Activated T-helper 1 cell treated with anti-CD3 and anti-CD28 coated beads, Interleukin-12 subunit alpha, Interleukin-12 subunit beta, Interleukin-2, Interleukin-4 antibody, amounts not matched to agents 30 ng/mL and 10 ng/mL and 1 ng/mL, durations not matched to agents 14 hours and 24 hours and 36 hours (primary cell): ENCODE measurements at regions of chr10 and their contacts with region 1.

Region 1: GRCh38 chr10:103800789-103801540 is 54.4 kb downstream of the SH3PXD2A start:
- DNase-seq: peak; percentile 64
- H3K4me3 Mint-ChIP-seq: peak overlapping the region; percentile 65
- H3K27ac Mint-ChIP-seq: peak overlapping the region; percentile 80
- H3K4me1 Mint-ChIP-seq: peaks cover 31% of the 10 kb centered on the region
- H3K27me3 Mint-ChIP-seq: peaks cover 3% of the 10 kb centered on the region

Region 2: DNA sequence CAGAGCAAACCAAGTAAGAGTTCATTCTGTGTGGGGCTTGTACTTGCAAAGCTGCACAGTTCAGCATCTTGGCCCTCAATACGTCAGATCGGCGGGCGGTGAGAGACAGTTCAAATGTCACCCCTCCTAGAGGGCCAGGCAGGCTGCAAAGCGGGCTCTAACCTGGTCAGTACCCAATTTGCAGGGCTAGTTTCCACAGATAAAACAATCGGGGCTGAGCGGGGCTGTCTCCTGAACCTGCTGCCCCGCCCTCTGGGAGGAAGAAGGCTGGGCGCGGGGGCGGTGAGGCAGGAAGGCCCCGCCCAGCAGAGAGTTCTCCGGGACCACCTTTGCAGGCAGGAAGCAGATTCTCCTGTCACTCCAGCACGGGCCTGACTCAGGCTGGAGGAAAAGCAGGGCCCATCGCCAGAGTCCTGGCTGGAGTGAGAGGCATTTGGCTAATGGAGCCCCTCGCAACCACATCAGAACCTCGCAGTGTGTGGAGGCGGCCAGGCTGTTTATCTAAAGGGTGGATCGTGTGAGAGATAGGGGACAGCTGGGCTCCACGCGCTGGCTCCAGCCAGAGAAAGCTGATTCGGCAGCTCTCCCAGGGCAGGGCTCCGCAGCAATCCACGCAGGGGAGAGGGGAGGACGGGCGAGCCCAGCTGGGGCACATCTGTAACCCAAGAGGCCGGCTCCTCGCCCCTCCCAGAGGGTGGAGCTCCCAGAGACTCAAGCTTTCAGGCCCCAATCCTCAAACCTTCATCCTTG is 28.7 kb before region 1 on chr10:
- intact Hi-C with region 1: loop called (anchors 2 kb)
- DNase-seq: peak; percentile 60
- H3K4me3 Mint-ChIP-seq: peak overlapping the region; percentile 87
- H3K27ac Mint-ChIP-seq: peak overlapping the region; percentile 83
- H3K4me1 Mint-ChIP-seq: peaks cover 34% of the 10 kb centered on the region
- H3K27me3 Mint-ChIP-seq: peaks cover 6% of the 10 kb centered on the region

Region 3: GRCh38 chr10:103859161-103860086 is 58.5 kb after region 1 on chr10:
- intact Hi-C with region 1: loop called (anchors 5 kb)
- DNase-seq: peak; percentile 40
- H3K4me3 Mint-ChIP-seq: peak overlapping the region; percentile 2
- H3K27ac Mint-ChIP-seq: no peak overlapping the region
- H3K4me1 Mint-ChIP-seq: peaks cover 19% of the 10 kb centered on the region
- H3K27me3 Mint-ChIP-seq: peaks cover 39% of the 10 kb centered on the region